Upper lobe of right lung (tissue), 1 donor: ENCODE measurements at regions of chr6 and their contacts with region 1.

Region 1: GRCh38 chr6:78259935-78260334 is 607.1 kb downstream of the MEI4 start:
- DNase-seq: no peak
- ATAC-seq: no peak
- H3K4me3 ChIP-seq: no peak overlapping the region
- H3K27ac ChIP-seq: no peak overlapping the region
- H3K4me1 ChIP-seq: no peaks in the 10 kb centered on the region
- H3K27me3 ChIP-seq: no peaks in the 10 kb centered on the region
- CTCF ChIP-seq: no peak

Region 2: DNA sequence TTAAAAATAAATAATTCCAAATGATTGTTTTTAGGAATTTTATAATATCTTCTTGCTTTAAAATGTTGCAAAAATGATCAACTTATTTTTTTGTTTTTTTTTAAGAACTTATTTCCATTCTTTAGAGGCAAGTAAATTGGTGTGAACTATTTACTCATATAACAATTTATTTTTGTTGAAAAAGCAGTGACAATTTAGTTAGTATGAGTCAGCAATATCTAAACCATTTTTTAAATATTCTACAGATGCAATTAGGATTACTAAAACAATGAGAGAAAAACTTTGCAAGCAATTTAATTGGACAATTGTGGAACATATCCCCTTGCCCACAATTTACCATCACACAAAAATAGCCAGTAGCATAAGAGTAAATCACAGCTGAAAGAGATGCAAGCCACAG is 287.6 kb before region 1 on chr6:
- intact Hi-C with region 1: no loop called
- DNase-seq: no peak
- ATAC-seq: no peak
- H3K4me3 ChIP-seq: no peak overlapping the region
- H3K27ac ChIP-seq: no peak overlapping the region
- H3K4me1 ChIP-seq: no peaks in the 10 kb centered on the region
- H3K27me3 ChIP-seq: no peaks in the 10 kb centered on the region
- CTCF ChIP-seq: no peak

Region 3: DNA sequence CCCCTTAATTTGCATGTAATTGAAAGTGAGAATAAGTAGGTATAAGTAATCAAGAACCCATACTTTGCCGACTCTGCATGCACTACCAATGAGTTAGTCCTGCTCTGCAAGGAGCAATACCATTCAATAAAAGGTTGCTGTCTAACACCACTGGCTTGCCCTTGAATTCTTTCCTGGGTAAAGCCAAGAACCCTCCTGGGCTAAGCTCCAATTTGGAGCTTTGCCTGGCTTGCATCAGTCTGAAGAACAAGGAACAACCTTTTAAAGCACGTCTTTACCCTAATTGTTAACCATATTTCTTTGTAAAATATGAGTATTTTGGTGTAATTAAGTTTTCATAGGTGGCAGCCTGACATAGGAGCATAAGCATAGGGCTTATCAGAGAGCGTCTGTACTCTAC is 239.3 kb before region 1 on chr6:
- intact Hi-C with region 1: no loop called
- DNase-seq: no peak
- ATAC-seq: no peak
- H3K4me3 ChIP-seq: no peak overlapping the region
- H3K27ac ChIP-seq: no peak overlapping the region
- H3K4me1 ChIP-seq: no peaks in the 10 kb centered on the region
- H3K27me3 ChIP-seq: no peaks in the 10 kb centered on the region
- CTCF ChIP-seq: no peak

Region 4: GRCh38 chr6:78150425-78150824 is 109.5 kb before region 1 on chr6:
- intact Hi-C with region 1: no loop called
- DNase-seq: no peak
- ATAC-seq: no peak
- H3K4me3 ChIP-seq: no peak overlapping the region
- H3K27ac ChIP-seq: no peak overlapping the region
- H3K4me1 ChIP-seq: no peaks in the 10 kb centered on the region
- H3K27me3 ChIP-seq: no peaks in the 10 kb centered on the region
- CTCF ChIP-seq: no peak

Region 5: DNA sequence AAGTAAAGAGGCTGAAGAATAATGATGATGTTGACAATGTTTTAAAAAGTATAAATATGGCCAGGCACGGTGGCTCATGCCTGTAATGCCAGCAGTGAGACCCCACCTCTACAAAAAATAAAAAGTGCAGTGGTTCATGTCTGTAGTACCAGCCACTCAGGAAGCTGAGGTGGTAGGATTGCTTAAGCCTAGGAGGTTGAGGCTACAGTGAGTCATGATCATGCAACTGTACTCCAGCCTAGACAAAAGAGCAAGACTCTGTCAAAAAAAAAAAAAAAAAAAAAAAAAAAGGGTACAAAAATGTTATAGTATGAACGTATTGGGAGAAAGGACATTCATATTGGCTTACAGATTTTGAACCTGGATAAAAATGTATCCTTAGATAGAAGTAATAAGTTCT is 64.3 kb after region 1 on chr6:
- intact Hi-C with region 1: loop called (anchors 5 kb)
- DNase-seq: no peak
- ATAC-seq: no peak
- H3K4me3 ChIP-seq: no peak overlapping the region
- H3K27ac ChIP-seq: no peak overlapping the region
- H3K4me1 ChIP-seq: no peaks in the 10 kb centered on the region
- H3K27me3 ChIP-seq: no peaks in the 10 kb centered on the region
- CTCF ChIP-seq: no peak